Heart right ventricle (tissue), 16 donors: ENCODE measurements at regions of chr16 and their contacts with region 1.

Region 1: GRCh38 chr16:31618130-31618529 is 90.4 kb downstream of the AHSP start:
- DNase-seq: no peak
- ATAC-seq: no peak
- H3K4me3 ChIP-seq: no peak overlapping the region
- H3K27ac ChIP-seq: no peak overlapping the region
- H3K4me1 ChIP-seq: no peaks in the 10 kb centered on the region
- H3K27me3 ChIP-seq: peaks cover 0 to 9% (median 0%) of the 10 kb centered on the region in 7 donors
- CTCF ChIP-seq: no peak

Region 2: DNA sequence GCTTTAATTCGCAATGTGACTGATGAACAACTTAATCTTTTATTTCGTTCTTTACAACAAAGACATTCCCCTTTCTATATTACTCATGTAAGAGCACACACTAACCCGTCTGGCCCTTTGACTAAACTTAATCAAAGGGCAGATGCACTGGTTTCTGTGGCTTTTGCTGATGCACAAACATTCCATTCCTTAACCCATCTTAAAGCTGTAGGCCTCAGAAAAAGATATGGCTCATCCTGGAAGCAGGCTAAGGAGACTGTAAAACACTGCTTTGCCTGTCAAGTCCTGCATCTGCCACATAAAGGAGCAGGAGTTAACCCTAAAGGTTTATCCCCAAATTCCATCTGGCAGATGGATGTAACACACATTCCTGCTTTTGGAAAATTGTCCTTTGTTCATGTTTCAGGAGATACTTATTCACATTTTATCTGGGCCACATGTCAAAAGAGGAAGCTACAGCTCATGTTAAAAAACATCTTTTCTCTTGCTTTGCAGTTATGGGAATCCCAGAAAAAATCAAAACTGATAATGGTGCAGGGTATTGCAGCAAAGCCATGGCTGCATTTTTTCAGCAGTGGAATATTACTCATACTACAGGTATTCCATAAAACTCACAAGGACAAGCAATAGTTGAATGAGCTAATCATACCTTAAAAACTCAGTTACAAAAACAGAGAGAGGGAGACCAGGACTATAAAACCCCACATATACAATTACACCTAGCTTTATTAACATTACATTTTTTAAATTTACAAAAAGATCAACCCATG is 46.8 kb after region 1 on chr16:
- intact Hi-C with region 1: loop called in 1 of 10 experiments (anchors 10 kb)
- DNase-seq: no peak
- ATAC-seq: no peak
- H3K4me3 ChIP-seq: no peak overlapping the region
- H3K27ac ChIP-seq: no peak overlapping the region
- H3K4me1 ChIP-seq: no peaks in the 10 kb centered on the region
- H3K27me3 ChIP-seq: peaks cover 0 to 13% (median 0%) of the 10 kb centered on the region in 7 donors
- CTCF ChIP-seq: no peak

Region 3: DNA sequence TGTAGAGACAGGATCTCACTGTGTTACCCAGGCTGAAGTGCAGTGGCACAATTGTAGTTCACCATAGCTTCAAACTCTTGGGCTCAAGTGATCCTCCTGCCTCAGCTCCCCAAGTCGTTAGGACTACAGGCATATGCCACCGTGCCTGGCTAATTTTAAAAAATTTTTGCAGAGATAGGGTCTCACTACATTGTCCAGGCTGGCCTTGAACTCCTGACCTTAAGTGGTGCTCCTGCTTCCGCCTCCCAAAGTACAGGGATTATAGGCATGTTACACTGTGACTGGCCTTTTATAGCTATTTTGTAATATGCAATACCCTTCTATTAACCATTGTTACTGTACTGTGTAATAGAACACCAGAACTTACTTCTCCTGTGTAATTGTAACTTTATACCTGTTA is 116.1 kb after region 1 on chr16:
- intact Hi-C with region 1: no loop called
- DNase-seq: no peak
- ATAC-seq: no peak
- H3K4me3 ChIP-seq: no peak overlapping the region
- H3K27ac ChIP-seq: no peak overlapping the region
- H3K4me1 ChIP-seq: no peaks in the 10 kb centered on the region
- H3K27me3 ChIP-seq: no peaks in the 10 kb centered on the region
- CTCF ChIP-seq: no peak